Mammary epithelial cell (primary cell): ENCODE measurements at regions of chr2 and their contacts with region 1.

Region 1: GRCh38 chr2:27596627-27597026 is 13.8 kb downstream of the ZNF512 start:
- DNase-seq: peak; percentile 21
- H3K4me3 ChIP-seq: no peak overlapping the region
- H3K27ac ChIP-seq: no peak overlapping the region
- H3K4me1 ChIP-seq: no peaks in the 10 kb centered on the region
- H3K27me3 ChIP-seq: no peaks in the 10 kb centered on the region
- CTCF ChIP-seq: no peak

Region 2: GRCh38 chr2:27148801-27149439 is 447.7 kb before region 1 on chr2 and contains the start of gene TCF23:
- CTCF ChIA-PET with region 1: no interaction called
- dilution Hi-C with region 1: no loop called
- in situ Hi-C with region 1: no loop called
- intact Hi-C with region 1: no loop called
- DNase-seq: no peak
- H3K4me3 ChIP-seq: no peak within 1 kb of the TSS
- H3K27ac ChIP-seq: no peak within 1 kb of the TSS
- H3K4me1 ChIP-seq: peaks cover 8% of the 10 kb centered on the region
- H3K27me3 ChIP-seq: no peaks in the 10 kb centered on the region
- CTCF ChIP-seq: no peak
- total RNA-seq, gene TCF23: not detected

Region 3: GRCh38 chr2:27638037-27638637 is 41.5 kb after region 1 on chr2:
- CTCF ChIA-PET with region 1: no interaction called
- dilution Hi-C with region 1: loop called (anchors 5 kb)
- in situ Hi-C with region 1: no loop called
- intact Hi-C with region 1: no loop called
- DNase-seq: peak; percentile 97
- H3K4me3 ChIP-seq: no peak overlapping the region
- H3K27ac ChIP-seq: peak overlapping the region; percentile 94
- H3K4me1 ChIP-seq: peaks cover 29% of the 10 kb centered on the region
- H3K27me3 ChIP-seq: no peaks in the 10 kb centered on the region
- CTCF ChIP-seq: no peak